GM12878 (cell line): ENCODE measurements at regions of chr16 and their contacts with region 1.

Region 1: GRCh38 chr16:68448360-68448970 is at the start of gene SMPD3:
- DNase-seq: peak; percentile 86
- ATAC-seq: peak; percentile 97
- H3K4me3 ChIP-seq: peak within 1 kb of the TSS; percentile 52
- H3K27ac ChIP-seq: no peak within 1 kb of the TSS
- H3K4me1 ChIP-seq: no peaks in the 10 kb centered on the region
- H3K27me3 ChIP-seq: 0 out of 4 replicates have a peak, but pooled peaks cover 0 to 2% of the 10 kb centered on the region in 2 experiments
- CTCF ChIP-seq: no peak
- EP300 ChIP-seq: no peak
- POLR2A ChIP-seq: no peak
- RAD21 ChIP-seq: no peak
- polyA plus RNA-seq, gene SMPD3: 0.06 to 0.22 TPM

Region 2: DNA sequence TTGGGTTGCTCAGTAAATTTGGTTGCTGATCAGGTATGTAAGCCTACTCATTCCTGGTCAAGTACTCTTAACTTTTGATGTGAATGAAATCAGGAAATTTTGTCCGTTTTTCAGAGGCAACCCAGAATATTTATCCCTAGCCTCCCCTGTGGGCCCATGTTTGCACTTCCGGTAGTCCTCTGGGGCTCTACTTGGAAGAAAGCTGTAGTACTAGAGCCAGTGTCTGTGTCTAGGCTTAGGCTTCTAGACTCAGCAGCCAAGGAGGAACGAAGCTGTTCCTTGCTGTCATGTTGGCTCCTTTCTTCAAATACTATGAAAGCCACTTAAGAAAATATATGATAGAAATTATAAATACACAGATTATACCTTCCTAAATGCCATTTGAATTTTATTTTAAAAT is 233.7 kb before region 1 on chr16:
- CTCF ChIA-PET with region 1: no interaction called
- POLR2A ChIA-PET with region 1: no interaction called
- RAD21 ChIA-PET with region 1: no interaction called
- SMC1A ChIA-PET with region 1: no interaction called
- in situ Hi-C with region 1: no loop called
- intact Hi-C with region 1: no loop called
- DNase-seq: no peak
- ATAC-seq: no peak
- H3K4me3 ChIP-seq: no peak overlapping the region
- H3K27ac ChIP-seq: no peak overlapping the region
- H3K4me1 ChIP-seq: peaks cover 7% of the 10 kb centered on the region
- H3K27me3 ChIP-seq: no peaks in the 10 kb centered on the region
- CTCF ChIP-seq: no peak
- EP300 ChIP-seq: no peak
- POLR2A ChIP-seq: no peak
- RAD21 ChIP-seq: no peak

Region 3: DNA sequence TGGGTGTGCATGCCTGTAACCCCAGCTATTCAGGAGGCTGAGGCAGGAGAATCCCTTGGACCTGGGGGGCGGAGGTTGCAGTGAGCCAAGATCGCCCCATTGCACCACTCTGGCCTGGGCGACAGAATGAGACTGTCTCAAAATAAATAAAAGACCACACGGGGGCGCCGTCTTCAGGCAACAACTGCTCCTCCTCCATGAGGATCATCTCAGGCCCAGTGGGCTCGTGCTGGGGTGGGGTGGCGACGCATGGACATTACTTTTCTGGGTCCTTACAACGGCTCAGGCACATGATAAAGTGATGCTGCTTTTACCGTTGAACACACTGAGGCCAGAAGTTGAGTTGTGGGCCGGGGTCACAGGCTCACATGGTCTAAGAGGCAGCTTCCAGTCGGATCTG is 81.4 kb before region 1 on chr16:
- CTCF ChIA-PET with region 1: interaction called, 5 read pairs
- POLR2A ChIA-PET with region 1: no interaction called
- RAD21 ChIA-PET with region 1: interaction called, 3 read pairs
- SMC1A ChIA-PET with region 1: interaction called, 3 read pairs
- in situ Hi-C with region 1: no loop called
- intact Hi-C with region 1: loop called (anchors 5 kb)
- DNase-seq: no peak
- ATAC-seq: peak; percentile 26
- H3K4me3 ChIP-seq: no peak overlapping the region
- H3K27ac ChIP-seq: no peak overlapping the region
- H3K4me1 ChIP-seq: peaks cover 42% of the 10 kb centered on the region
- H3K27me3 ChIP-seq: no peaks in the 10 kb centered on the region
- CTCF ChIP-seq: peak; percentile 34 to 42 (median 41); a peak in 5 of 6 replicates
- EP300 ChIP-seq: no peak
- POLR2A ChIP-seq: no peak
- RAD21 ChIP-seq: peak; percentile 34; the same call in 1 of the 2 replicates

Region 4: DNA sequence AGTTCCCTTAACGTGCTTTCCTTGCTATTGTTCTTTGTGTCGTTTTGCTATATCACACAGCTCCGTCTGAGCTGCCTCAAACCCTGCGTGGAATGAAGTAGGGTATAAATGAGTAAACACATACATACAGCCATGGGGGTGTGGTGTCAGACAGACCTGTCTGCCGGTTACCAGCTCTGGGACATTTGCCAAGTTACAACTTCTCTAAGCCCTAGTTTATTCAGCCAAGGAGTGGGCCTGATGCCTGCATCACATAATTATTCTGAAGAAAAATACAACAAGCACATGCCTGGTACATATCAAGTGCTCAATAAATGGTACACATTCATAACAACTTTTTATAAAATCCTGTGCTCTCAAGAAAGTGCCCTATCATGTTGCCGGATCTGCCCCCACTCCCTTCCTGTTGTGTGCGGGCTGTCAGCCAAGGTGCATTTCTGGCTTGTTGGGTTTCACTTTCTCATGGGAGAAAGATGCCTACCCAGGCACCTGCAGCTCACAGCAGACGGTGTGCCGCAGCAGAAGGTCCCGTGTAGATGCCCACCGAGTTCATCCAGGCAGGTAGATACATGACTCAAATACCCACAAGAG is 30.7 kb before region 1 on chr16:
- CTCF ChIA-PET with region 1: interaction called, 4 read pairs
- POLR2A ChIA-PET with region 1: no interaction called
- RAD21 ChIA-PET with region 1: interaction called, 4 read pairs
- SMC1A ChIA-PET with region 1: interaction called, 4 read pairs
- in situ Hi-C with region 1: no loop called
- intact Hi-C with region 1: loop called (anchors 2 kb)
- DNase-seq: peak; percentile 73
- ATAC-seq: peak; percentile 93
- H3K4me3 ChIP-seq: peak overlapping the region; percentile 16; the same call in 1 of the 2 replicates
- H3K27ac ChIP-seq: peak overlapping the region; percentile 70
- H3K4me1 ChIP-seq: peaks cover 25% of the 10 kb centered on the region
- H3K27me3 ChIP-seq: no peaks in the 10 kb centered on the region
- CTCF ChIP-seq: no peak
- EP300 ChIP-seq: no peak
- POLR2A ChIP-seq: peak; percentile 24; the same call in 1 of the 2 replicates
- RAD21 ChIP-seq: no peak

Region 5: DNA sequence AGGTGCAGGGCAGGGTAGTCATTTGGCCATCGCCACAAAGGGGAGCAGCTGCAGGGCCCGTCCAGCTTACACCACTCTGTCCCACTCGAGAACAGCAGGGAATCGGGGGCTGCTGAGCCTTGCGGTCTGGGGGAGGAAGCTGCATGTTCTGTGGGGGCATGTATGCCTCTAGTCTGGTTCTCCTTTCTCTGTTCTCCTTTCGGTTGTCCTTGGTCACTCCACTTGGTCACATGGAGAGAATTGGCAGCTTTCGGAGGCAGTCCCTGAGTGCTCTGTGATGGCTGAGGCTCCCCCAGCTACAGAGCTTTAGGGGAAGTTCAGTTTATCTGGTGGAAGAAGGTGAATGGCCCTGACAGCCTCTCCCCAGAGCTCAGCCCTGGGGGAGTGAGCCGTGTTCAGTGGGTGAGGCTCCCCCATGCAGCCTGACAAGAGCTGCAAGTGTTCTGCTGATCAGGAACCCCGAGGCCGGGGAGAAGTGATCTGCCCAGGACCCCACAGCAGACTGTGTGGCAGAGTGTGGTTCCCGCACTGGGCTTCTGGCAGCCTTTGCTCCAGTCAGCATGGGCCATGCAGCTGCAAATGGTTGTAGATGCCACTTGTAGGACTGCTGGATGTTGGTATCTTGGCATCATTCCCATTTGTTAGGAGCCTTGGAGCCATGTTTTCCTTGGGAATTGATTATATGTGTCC is 22.1 kb after region 1 on chr16:
- CTCF ChIA-PET with region 1: interaction called, 7 read pairs
- POLR2A ChIA-PET with region 1: no interaction called
- RAD21 ChIA-PET with region 1: interaction called, 20 read pairs
- SMC1A ChIA-PET with region 1: interaction called, 4 read pairs
- in situ Hi-C with region 1: no loop called
- intact Hi-C with region 1: no loop called
- DNase-seq: peak; percentile 94
- ATAC-seq: peak; percentile 98
- H3K4me3 ChIP-seq: peak overlapping the region; percentile 65; the same call in 1 of the 2 replicates
- H3K27ac ChIP-seq: peak overlapping the region; percentile 96
- H3K4me1 ChIP-seq: peaks cover 57% of the 10 kb centered on the region
- H3K27me3 ChIP-seq: no peaks in the 10 kb centered on the region
- CTCF ChIP-seq: no peak
- EP300 ChIP-seq: peak; percentile 44 to 86; a peak in 2 of 4 replicates
- POLR2A ChIP-seq: peak; percentile 74
- RAD21 ChIP-seq: no peak

Region 6: GRCh38 chr16:68512183-68512582 is 63.7 kb after region 1 on chr16:
- CTCF ChIA-PET with region 1: interaction called, 82 read pairs
- POLR2A ChIA-PET with region 1: no interaction called
- RAD21 ChIA-PET with region 1: interaction called, 5 read pairs
- SMC1A ChIA-PET with region 1: interaction called, 18 read pairs
- in situ Hi-C with region 1: loop called (anchors 5 kb)
- intact Hi-C with region 1: loop called (anchors 1 kb)
- DNase-seq: no peak
- ATAC-seq: no peak
- H3K4me3 ChIP-seq: no peak overlapping the region
- H3K27ac ChIP-seq: no peak overlapping the region
- H3K4me1 ChIP-seq: no peaks in the 10 kb centered on the region
- H3K27me3 ChIP-seq: no peaks in the 10 kb centered on the region; a peak in 2 of 4 replicates
- CTCF ChIP-seq: no peak
- EP300 ChIP-seq: no peak
- POLR2A ChIP-seq: no peak
- RAD21 ChIP-seq: no peak

Region 7: GRCh38 chr16:68520649-68521086 is 72.2 kb after region 1 on chr16:
- CTCF ChIA-PET with region 1: interaction called, 16 read pairs
- POLR2A ChIA-PET with region 1: no interaction called
- RAD21 ChIA-PET with region 1: interaction called, 4 read pairs
- SMC1A ChIA-PET with region 1: interaction called, 5 read pairs
- in situ Hi-C with region 1: no loop called
- intact Hi-C with region 1: no loop called
- DNase-seq: no peak
- ATAC-seq: peak; percentile 98
- H3K4me3 ChIP-seq: no peak overlapping the region
- H3K27ac ChIP-seq: no peak overlapping the region
- H3K4me1 ChIP-seq: no peaks in the 10 kb centered on the region; the same call in 1 of the 2 replicates
- H3K27me3 ChIP-seq: no peaks in the 10 kb centered on the region; a peak in 1 of 4 replicates
- CTCF ChIP-seq: peak; percentile 99 to 100 (median 100); a peak in 5 of 6 replicates
- EP300 ChIP-seq: peak in 1 of 2 experiments; percentile 25; a peak in 1 of 4 replicates
- POLR2A ChIP-seq: no peak
- RAD21 ChIP-seq: peak; percentile 55